Right ventricle myocardium superior (tissue), 1 donor: ENCODE measurements at regions of chr18 and their contacts with region 1.

Region 1: GRCh38 chr18:74652392-74652988 is 54.8 kb downstream of the ZNF407 start:
- DNase-seq: no peak
- ATAC-seq: no peak

Region 2: GRCh38 chr18:74836296-74837139 is 184.0 kb after region 1 on chr18:
- intact Hi-C with region 1: no loop called
- DNase-seq: no peak
- ATAC-seq: peak; percentile 70

Region 3: DNA sequence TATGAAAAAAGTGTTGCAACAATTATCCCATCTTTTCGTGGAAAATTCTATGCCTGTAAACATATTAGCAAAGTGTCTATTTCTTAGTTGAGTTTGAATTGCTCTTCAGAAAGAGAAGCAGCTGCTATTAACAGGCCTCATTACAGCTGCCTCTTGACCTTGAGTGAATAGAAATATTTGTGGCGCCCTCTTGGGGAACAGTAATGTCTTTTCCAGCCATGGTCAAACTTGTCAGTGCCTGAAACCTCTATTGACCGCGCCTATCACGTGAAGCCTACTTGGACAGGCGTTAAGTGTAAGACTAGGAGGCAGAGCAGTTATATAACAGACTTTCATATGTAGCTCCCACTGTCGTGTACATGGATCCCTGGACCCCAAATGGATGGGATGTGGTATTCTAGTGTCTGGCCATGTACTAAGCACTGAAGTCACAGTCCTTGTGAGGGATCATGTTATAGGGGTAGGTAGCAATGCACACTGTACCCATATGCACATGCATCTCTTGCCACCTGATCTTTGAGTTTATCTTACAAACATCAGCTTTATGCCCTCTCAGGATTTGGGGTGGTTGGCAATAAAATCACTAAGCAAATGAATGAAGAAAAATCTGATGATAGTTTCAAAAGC is 311.4 kb after region 1 on chr18:
- intact Hi-C with region 1: loop called (anchors 10 kb)
- DNase-seq: no peak
- ATAC-seq: peak; percentile 89

Region 4: DNA sequence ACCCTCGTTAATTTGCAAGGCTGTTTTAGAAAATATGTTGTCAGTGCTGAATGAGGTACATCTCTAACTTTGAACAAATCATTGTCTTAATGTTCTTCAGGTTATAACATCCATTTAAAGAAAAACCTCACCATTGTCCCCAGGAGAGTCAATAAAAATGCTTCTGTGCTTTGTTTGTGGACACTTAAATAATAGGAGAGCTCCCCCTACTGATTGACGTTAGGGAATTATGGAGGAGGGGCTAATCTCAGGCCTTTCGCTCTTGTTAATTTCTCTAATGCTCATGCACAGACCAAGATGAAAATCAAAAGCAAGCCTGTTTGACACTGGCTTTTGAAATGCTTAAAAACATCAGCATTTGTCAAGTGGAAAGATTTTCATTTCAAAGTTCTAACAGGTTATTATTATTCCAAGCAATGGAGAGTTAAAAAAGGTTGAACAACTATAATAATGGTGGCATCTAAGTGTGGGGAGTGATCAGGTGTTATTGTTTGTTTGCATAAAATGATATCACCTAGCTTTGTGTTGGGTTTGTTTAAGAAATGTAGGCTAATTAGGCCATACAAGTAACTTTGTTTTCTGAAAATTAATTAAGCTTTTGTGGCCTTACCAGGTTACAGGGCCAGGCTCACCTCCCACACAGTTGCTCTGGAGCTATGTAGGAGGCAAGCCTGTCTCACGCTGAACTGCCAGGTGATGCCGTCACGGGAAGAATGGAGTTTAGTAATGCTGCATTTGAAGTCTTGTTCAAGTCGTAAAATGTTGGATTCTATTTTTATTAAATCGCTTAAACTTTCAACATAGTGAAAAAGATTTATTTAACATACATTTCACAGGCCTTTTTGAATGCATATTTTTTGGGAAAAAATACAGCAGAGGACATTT is 826.7 kb after region 1 on chr18:
- intact Hi-C with region 1: loop called (anchors 5 kb)
- DNase-seq: no peak
- ATAC-seq: peak; percentile 85

Region 5: GRCh38 chr18:76349067-76349715 is 1696.7 kb after region 1 on chr18:
- intact Hi-C with region 1: loop called (anchors 10 kb)
- DNase-seq: peak; percentile 53
- ATAC-seq: peak; percentile 45